ENCODE measurements at regions of chr18 and their contacts with region 1.

Region 1: GRCh38 chr18:22169007-22169864 is at the start of gene GATA6:
- DNase-seq: peak; percentile 89 to 94
- ATAC-seq: peak; percentile 71
- total RNA-seq, gene GATA6: 46.1 to 57.8 TPM

Region 2: DNA sequence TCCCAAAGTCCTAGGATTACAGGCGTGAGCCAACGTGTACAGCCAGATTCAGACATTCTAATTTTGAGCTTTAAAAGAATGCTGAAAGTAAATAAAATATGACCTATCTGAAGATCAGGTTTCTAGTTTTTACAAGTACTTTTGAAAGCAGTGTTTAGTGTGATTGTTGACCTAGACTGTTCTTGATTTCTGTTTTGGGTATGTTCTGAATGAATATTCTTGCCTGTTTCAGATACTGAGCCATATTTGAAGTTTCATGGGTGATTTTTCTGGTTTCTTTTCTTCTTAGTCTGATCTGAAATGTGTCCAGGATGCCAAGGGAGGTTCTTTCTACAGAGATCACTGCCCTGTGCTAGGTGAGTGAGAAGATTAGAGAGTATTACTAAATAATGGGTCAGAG is 391.4 kb before region 1 on chr18:
- intact Hi-C with region 1: no loop called
- DNase-seq: no peak
- ATAC-seq: no peak

Region 3: GRCh38 chr18:21933931-21934765 is 235.1 kb before region 1 on chr18:
- intact Hi-C with region 1: no loop called
- DNase-seq: no peak
- ATAC-seq: no peak

Region 4: DNA sequence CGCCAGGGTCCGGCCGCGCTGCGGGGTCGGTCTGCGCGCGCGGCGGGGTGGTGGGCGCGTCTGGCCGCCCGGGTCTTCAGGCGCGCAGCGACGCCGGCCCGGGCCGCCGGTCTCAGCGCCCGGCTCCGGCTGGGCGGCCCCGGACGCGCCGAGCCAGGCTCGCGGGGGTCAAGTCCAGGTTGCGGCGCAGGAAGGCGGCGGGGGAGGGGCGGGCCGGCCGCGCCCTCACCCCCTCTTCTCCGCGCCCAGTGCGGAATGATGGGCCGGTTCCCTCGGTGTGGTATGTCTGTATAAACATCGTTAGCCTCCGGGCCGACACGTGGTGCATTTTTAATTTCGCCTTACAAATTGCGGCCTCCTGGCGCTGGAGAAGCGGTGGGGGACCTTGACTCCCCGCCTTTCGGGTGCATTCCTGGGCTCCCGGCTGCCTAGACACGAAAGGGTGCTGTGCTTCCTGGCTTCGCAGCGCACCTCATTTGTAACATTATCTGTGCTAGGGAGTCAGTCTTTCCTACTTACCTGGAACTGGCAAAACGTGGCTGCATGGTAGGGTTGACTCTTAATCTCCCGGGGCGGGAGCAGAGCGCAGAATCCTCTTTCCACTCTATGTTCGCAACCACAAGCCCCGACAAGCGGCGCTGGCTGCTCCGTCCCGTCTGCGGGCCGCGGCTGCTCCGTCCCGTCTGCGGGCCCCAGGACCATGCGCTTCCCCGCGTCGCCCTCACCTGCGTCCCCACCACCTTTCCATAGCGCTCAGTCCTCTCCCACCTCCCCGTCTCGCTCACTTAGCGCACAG is 179.5 kb after region 1 on chr18:
- intact Hi-C with region 1: loop called in 1 of 2 experiments (anchors 10 kb)
- DNase-seq: peak; percentile 69 to 75
- ATAC-seq: peak; percentile 68

Region 5: GRCh38 chr18:22485808-22486244 is 316.6 kb after region 1 on chr18:
- intact Hi-C with region 1: no loop called
- DNase-seq: no peak
- ATAC-seq: no peak

Region 6: GRCh38 chr18:22563098-22563707 is 394.0 kb after region 1 on chr18:
- intact Hi-C with region 1: loop called in 1 of 2 experiments (anchors 10 kb)
- DNase-seq: peak; percentile 7 to 30
- ATAC-seq: peak; percentile 89

Region 7: DNA sequence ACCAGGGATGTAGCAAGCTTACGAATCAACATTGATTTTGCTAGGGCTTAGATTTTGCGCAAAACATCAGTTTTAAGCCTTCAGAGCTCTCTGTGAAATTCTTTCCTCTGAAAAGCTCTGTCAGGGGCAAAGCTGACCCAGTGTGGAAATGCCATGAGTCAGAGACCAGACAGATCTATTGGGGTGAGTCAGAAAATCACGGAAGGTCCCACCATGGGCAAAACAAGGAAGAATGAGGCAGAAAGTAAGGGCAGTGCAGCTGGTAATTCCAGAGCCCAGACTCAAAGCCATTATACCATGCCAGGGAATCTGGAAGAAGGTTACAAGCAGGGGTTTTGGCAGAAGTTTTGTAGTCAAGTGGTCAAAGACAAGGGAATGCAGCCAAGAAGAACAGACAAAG is 505.0 kb after region 1 on chr18:
- intact Hi-C with region 1: loop called in 1 of 2 experiments (anchors 10 kb)
- DNase-seq: no peak
- ATAC-seq: no peak